CD4-positive, alpha-beta T cell (primary cell): ENCODE measurements at regions of chr16 and their contacts with region 1.

Region 1: DNA sequence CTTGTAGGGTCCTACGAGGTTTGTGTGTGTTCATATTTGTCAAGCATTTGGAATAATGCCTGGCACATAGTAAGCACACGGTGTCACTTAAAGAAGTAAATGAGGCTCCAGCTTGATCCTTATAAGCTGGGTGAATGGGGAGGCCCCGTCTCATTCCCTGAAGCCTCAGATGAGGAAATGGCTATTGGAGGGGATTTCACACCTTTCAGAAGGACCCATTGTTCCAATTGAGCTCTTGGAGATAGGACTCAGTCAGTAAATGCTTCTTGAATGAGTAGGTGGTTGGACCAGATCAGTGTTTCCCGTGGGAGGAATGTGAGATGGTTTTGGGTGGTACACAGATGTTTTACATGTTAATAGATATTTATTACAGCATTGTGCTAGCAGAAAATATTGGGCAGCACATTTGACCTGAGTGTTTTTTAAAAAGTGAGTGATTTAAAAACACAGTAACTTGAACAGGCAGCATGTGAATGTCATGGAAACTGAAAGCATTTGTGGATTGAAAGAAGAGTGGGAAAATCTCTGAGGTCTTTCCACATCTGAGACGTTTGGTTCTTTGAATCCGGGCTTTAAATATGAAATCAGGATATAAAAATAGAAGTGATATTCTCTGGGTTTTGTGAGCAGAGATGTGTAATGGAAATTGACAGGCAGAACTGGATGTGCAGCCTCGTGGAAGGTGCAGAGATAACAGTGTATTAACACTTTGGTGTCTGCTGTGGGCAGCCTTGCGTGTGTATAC is 36.4 kb upstream of the ARHGAP17 start:
- DNase-seq: peak in 1 of 14 experiments; percentile 27
- ATAC-seq: no peak
- H3K4me3 ChIP-seq: peak overlapping the region; percentile 30
- H3K4me3 Mint-ChIP-seq: peak overlapping the region; percentile 74
- H3K27ac ChIP-seq: peak overlapping the region; percentile 0 to 80
- H3K27ac Mint-ChIP-seq: peak overlapping the region; percentile 100
- H3K4me1 ChIP-seq: peaks cover 43% of the 10 kb centered on the region
- H3K4me1 Mint-ChIP-seq: peaks cover 53% of the 10 kb centered on the region
- H3K27me3 ChIP-seq: no peaks in the 10 kb centered on the region
- H3K27me3 Mint-ChIP-seq: no peaks in the 10 kb centered on the region
- CTCF ChIP-seq: no peak

Region 2: GRCh38 chr16:25014500-25015147 is 37.0 kb before region 1 on chr16:
- CTCF ChIA-PET with region 1: no interaction called
- POLR2A ChIA-PET with region 1: interaction called, 91 read pairs
- intact Hi-C with region 1: loop called in 1 of 2 experiments (anchors 2 kb)
- DNase-seq: peak in 10 of 14 experiments; percentile 1 to 49 (median 13)
- ATAC-seq: peak; percentile 34
- H3K4me3 ChIP-seq: peak overlapping the region; percentile 89
- H3K4me3 Mint-ChIP-seq: peak overlapping the region; percentile 96
- H3K27ac ChIP-seq: peak overlapping the region; percentile 76 to 78
- H3K27ac Mint-ChIP-seq: peak overlapping the region; percentile 91
- H3K4me1 ChIP-seq: peaks cover 58% of the 10 kb centered on the region
- H3K4me1 Mint-ChIP-seq: peaks cover 79% of the 10 kb centered on the region
- H3K27me3 ChIP-seq: no peaks in the 10 kb centered on the region
- H3K27me3 Mint-ChIP-seq: no peaks in the 10 kb centered on the region
- CTCF ChIP-seq: no peak

Region 3: GRCh38 chr16:25031441-25032307 is 19.9 kb before region 1 on chr16:
- CTCF ChIA-PET with region 1: no interaction called
- POLR2A ChIA-PET with region 1: interaction called, 61 read pairs
- intact Hi-C with region 1: loop called (anchors 1 kb)
- DNase-seq: peak; percentile 81 to 97 (median 86)
- ATAC-seq: peak; percentile 99
- H3K4me3 ChIP-seq: peak overlapping the region; percentile 88
- H3K4me3 Mint-ChIP-seq: peak overlapping the region; percentile 90
- H3K27ac ChIP-seq: peak overlapping the region in 1 of 2 donors; percentile 52
- H3K27ac Mint-ChIP-seq: peak overlapping the region; percentile 90
- H3K4me1 ChIP-seq: peaks cover 20% of the 10 kb centered on the region
- H3K4me1 Mint-ChIP-seq: peaks cover 30% of the 10 kb centered on the region
- H3K27me3 ChIP-seq: no peaks in the 10 kb centered on the region
- H3K27me3 Mint-ChIP-seq: no peaks in the 10 kb centered on the region
- CTCF ChIP-seq: no peak

Region 4: GRCh38 chr16:25066747-25067631 is 15.4 kb after region 1 on chr16:
- CTCF ChIA-PET with region 1: no interaction called
- POLR2A ChIA-PET with region 1: interaction called, 81 read pairs
- intact Hi-C with region 1: no loop called
- DNase-seq: peak; percentile 67 to 93 (median 76)
- ATAC-seq: peak; percentile 97
- H3K4me3 ChIP-seq: peak overlapping the region; percentile 91
- H3K4me3 Mint-ChIP-seq: peak overlapping the region; percentile 89
- H3K27ac ChIP-seq: peak overlapping the region; percentile 68 to 88
- H3K27ac Mint-ChIP-seq: peak overlapping the region; percentile 86
- H3K4me1 ChIP-seq: peaks cover 50% of the 10 kb centered on the region
- H3K4me1 Mint-ChIP-seq: peaks cover 43% of the 10 kb centered on the region
- H3K27me3 ChIP-seq: no peaks in the 10 kb centered on the region
- H3K27me3 Mint-ChIP-seq: no peaks in the 10 kb centered on the region
- CTCF ChIP-seq: no peak

Region 5: GRCh38 chr16:25224731-25225319 is 173.2 kb after region 1 on chr16:
- CTCF ChIA-PET with region 1: interaction called, 4 read pairs
- POLR2A ChIA-PET with region 1: interaction called, 4 read pairs
- intact Hi-C with region 1: loop called (anchors 1 kb)
- DNase-seq: no peak
- ATAC-seq: no peak
- H3K4me3 ChIP-seq: no peak overlapping the region
- H3K4me3 Mint-ChIP-seq: no peak overlapping the region
- H3K27ac ChIP-seq: no peak overlapping the region
- H3K27ac Mint-ChIP-seq: no peak overlapping the region
- H3K4me1 ChIP-seq: peaks cover 2% of the 10 kb centered on the region
- H3K4me1 Mint-ChIP-seq: no peaks in the 10 kb centered on the region
- H3K27me3 ChIP-seq: no peaks in the 10 kb centered on the region
- H3K27me3 Mint-ChIP-seq: no peaks in the 10 kb centered on the region
- CTCF ChIP-seq: no peak

Region 6: GRCh38 chr16:25257504-25257955 is 206.0 kb after region 1 on chr16 and contains the start of gene ZKSCAN2:
- CTCF ChIA-PET with region 1: no interaction called
- POLR2A ChIA-PET with region 1: no interaction called
- intact Hi-C with region 1: loop called in 1 of 2 experiments (anchors 10 kb)
- DNase-seq: peak; percentile 56 to 91 (median 78)
- ATAC-seq: peak; percentile 68
- H3K4me3 ChIP-seq: peak within 1 kb of the TSS; percentile 87
- H3K4me3 Mint-ChIP-seq: peak within 1 kb of the TSS; percentile 96
- H3K27ac ChIP-seq: peak within 1 kb of the TSS; percentile 80 to 92
- H3K27ac Mint-ChIP-seq: peak within 1 kb of the TSS; percentile 94
- H3K4me1 ChIP-seq: peaks cover 39% of the 10 kb centered on the region
- H3K4me1 Mint-ChIP-seq: peaks cover 68% of the 10 kb centered on the region
- H3K27me3 ChIP-seq: no peaks in the 10 kb centered on the region
- H3K27me3 Mint-ChIP-seq: no peaks in the 10 kb centered on the region
- CTCF ChIP-seq: no peak
- total RNA-seq, gene ZKSCAN2: 9.5 to 10.2 TPM